ENCODE measurements at regions of chr10 and their contacts with region 1.

Region 1: DNA sequence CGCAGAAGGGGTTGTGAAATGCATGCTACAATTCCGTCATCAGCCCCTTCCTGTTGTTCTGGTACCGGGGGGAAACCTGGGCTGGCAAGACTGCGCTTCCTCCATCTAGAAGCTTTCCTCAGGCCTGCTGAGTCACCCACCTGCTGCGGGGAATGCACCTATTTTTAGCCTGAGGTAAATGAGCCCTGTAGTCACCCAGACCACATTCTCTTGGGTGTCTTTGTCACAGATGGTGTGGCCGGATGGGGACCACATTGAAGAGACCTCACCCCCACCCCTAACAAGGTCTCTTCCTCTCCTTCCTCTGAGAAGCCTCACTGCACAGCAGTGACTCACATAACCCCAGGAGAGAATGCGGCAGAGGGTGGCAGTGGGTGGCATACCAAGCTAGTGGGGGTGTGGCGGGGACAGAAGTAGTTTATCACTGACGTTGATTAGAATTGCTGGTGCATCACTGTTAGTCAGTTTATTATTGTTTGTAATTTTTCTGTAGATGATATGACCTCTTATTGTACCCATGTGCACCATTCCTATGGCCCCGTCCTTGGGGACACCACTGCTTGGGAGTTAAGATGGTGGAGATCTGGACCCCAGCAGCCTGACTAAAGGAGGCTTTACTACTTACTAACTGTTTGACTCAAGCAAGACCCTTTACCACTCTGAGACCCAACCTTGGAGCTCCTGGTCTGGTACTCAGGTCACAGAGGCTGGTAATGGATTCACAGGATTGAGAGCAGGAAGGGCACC is 83.0 kb upstream of the DUSP5 start:
- DNase-seq: peak; percentile 97
- H3K4me3 Mint-ChIP-seq: peak overlapping the region; percentile 37
- H3K27ac Mint-ChIP-seq: peak overlapping the region; percentile 91
- H3K4me1 Mint-ChIP-seq: peaks cover 87% of the 10 kb centered on the region
- H3K27me3 Mint-ChIP-seq: no peaks in the 10 kb centered on the region

Region 2: GRCh38 chr10:110210674-110211464 is 203.9 kb before region 1 on chr10:
- CTCF ChIA-PET with region 1: no interaction called
- POLR2A ChIA-PET with region 1: no interaction called
- intact Hi-C with region 1: no loop called
- DNase-seq: peak; percentile 96
- H3K4me3 Mint-ChIP-seq: peak overlapping the region; percentile 96
- H3K27ac Mint-ChIP-seq: peak overlapping the region; percentile 91
- H3K4me1 Mint-ChIP-seq: peaks cover 54% of the 10 kb centered on the region
- H3K27me3 Mint-ChIP-seq: peaks cover 1% of the 10 kb centered on the region

Region 3: GRCh38 chr10:110311357-110311949 is 103.3 kb before region 1 on chr10:
- CTCF ChIA-PET with region 1: interaction called, 3 read pairs
- POLR2A ChIA-PET with region 1: no interaction called
- intact Hi-C with region 1: loop called (anchors 1 kb)
- DNase-seq: peak; percentile 52
- H3K4me3 Mint-ChIP-seq: no peak overlapping the region
- H3K27ac Mint-ChIP-seq: peak overlapping the region; percentile 9
- H3K4me1 Mint-ChIP-seq: peaks cover 31% of the 10 kb centered on the region
- H3K27me3 Mint-ChIP-seq: peaks cover 2% of the 10 kb centered on the region

Region 4: GRCh38 chr10:110387983-110388687 is 26.6 kb before region 1 on chr10:
- CTCF ChIA-PET with region 1: no interaction called
- POLR2A ChIA-PET with region 1: interaction called, 3 read pairs
- intact Hi-C with region 1: loop called (anchors 1 kb)
- DNase-seq: peak; percentile 65
- H3K4me3 Mint-ChIP-seq: no peak overlapping the region
- H3K27ac Mint-ChIP-seq: peak overlapping the region; percentile 86
- H3K4me1 Mint-ChIP-seq: peaks cover 25% of the 10 kb centered on the region
- H3K27me3 Mint-ChIP-seq: no peaks in the 10 kb centered on the region

Region 5: GRCh38 chr10:110425684-110426293 is 11.1 kb after region 1 on chr10:
- CTCF ChIA-PET with region 1: interaction called, 8 read pairs
- POLR2A ChIA-PET with region 1: interaction called, 40 read pairs
- intact Hi-C with region 1: loop called (anchors 1 kb)
- DNase-seq: peak; percentile 88
- H3K4me3 Mint-ChIP-seq: peak overlapping the region; percentile 30
- H3K27ac Mint-ChIP-seq: peak overlapping the region; percentile 96
- H3K4me1 Mint-ChIP-seq: peaks cover 66% of the 10 kb centered on the region
- H3K27me3 Mint-ChIP-seq: no peaks in the 10 kb centered on the region

Region 6: DNA sequence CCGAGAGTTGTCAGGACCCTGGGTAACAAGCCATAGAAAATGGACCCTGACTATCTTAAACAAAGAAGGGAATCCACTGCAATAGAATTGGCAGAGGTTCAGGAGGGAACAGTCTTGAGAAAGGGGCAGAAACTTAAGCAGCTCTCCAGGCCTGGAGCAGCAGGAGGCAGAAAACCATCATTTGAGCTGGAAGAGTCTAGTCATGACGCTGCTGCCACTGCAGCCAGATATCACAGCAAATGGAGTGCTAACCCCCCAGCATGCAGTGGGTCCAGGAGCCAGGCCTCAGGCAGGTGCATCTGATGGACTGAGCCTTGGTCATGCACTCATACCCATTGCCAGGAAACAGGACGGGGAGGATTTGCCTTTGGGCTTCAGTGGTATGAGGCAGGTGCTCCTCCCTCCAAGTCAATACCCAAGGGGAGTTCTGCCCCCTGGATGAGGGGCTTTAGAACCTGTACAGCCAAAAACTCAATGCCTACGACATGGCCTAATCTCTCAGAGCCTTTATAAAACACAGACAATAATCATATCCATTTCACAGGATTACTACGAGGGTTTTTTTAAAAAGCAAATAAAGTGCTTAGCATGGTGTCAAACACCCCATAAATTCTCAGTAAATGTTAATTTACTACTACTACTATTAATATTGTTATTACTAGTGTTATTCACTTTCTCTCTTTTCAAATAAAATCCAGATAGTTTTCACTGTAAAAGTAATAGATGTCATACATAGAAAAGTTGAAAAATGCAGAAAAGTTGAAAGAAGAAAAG is 113.7 kb after region 1 on chr10:
- CTCF ChIA-PET with region 1: no interaction called
- POLR2A ChIA-PET with region 1: interaction called, 3 read pairs
- intact Hi-C with region 1: loop called (anchors 2 kb)
- DNase-seq: peak; percentile 25
- H3K4me3 Mint-ChIP-seq: no peak overlapping the region
- H3K27ac Mint-ChIP-seq: peak overlapping the region; percentile 85
- H3K4me1 Mint-ChIP-seq: peaks cover 66% of the 10 kb centered on the region
- H3K27me3 Mint-ChIP-seq: no peaks in the 10 kb centered on the region

Region 7: GRCh38 chr10:110864662-110865140 is 450.0 kb after region 1 on chr10:
- CTCF ChIA-PET with region 1: no interaction called
- POLR2A ChIA-PET with region 1: no interaction called
- intact Hi-C with region 1: loop called (anchors 10 kb)
- DNase-seq: peak; percentile 65
- H3K4me3 Mint-ChIP-seq: peak overlapping the region; percentile 72
- H3K27ac Mint-ChIP-seq: peak overlapping the region; percentile 95
- H3K4me1 Mint-ChIP-seq: peaks cover 93% of the 10 kb centered on the region
- H3K27me3 Mint-ChIP-seq: no peaks in the 10 kb centered on the region

Measured in activated CD4-positive, alpha-beta memory T cell treated with anti-CD3 and anti-CD28 coated beads for 36 hours (primary cell).